ENCODE measurements at regions of chr2 and their contacts with region 1.

Region 1: DNA sequence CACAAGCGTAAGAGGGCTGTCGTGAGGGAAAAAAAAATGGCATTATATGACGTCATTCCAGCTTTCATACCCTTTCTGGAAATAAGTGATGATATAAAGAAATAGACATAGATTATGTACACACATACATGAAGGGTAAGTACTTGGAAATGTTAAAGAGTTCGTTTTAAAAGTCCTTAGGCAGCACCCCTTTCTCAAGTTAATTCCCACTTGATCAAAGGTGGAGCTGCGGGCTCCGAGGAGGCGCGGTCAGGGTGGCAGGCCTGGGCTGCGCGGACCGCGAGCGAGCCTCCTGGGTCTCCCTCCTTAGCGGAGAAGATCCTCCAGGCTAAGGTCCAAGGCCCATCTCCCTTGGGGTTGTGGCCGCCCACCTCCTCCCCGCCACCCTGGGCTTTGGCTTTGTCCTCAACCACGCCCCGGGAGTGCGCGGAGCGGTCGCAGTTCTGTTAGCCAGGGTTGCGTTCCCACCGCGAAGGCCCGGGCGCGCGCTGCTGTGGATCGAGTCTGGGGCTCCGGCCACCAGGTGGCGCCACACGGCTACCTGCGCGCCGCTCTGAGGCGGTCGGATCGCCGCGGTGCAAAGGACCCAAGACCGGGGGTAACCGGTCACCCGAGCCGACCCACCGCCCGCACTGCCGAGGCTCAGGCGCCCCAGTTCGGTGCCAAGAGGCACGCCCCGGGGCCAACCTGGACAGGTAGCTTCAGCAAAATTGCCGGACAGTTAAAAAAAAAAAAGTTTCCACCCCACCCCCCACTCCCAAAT is 66.8 kb downstream of the HNRNPLL start:
- DNase-seq: peak; percentile 80
- ATAC-seq: peak; percentile 94
- H3K4me3 ChIP-seq: peak overlapping the region; percentile 82
- H3K27ac ChIP-seq: no peak overlapping the region
- H3K4me1 ChIP-seq: no peaks in the 10 kb centered on the region
- H3K27me3 ChIP-seq: no peaks in the 10 kb centered on the region
- CTCF ChIP-seq: peak; percentile 88

Region 2: DNA sequence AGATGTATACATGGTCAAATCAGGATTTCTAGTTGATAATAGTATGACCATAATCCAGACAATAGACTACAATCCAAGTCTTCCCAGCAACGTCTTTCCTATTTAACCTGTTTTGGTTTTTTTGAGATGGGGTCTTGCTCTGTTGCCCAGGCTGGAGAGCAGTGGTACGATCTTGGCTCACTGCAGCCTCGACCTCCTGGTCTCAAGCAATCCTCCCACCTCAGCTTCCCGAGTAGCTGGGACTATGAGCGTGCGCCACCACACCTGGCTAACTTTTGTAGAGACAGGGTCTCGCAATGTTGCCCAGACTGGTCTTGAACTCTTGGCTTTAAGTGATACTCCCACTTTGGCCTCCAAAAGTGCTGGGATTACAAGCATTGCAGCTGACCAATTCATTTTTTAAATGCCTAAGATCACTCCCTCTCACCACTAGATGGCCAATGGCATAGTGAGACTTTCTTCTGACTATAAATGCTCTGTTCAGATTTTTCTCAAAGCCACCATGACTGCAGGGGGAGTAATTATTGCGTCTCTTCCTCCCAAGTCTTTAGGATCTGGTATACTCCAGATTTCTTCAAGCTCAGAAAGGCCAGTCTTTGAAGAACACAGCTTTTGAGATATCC is 19.2 kb after region 1 on chr2:
- CTCF ChIA-PET with region 1: interaction called, 18 read pairs
- POLR2A ChIA-PET with region 1: no interaction called
- intact Hi-C with region 1: no loop called
- DNase-seq: peak; percentile 56
- ATAC-seq: peak; percentile 77
- H3K4me3 ChIP-seq: no peak overlapping the region
- H3K27ac ChIP-seq: no peak overlapping the region
- H3K4me1 ChIP-seq: no peaks in the 10 kb centered on the region
- H3K27me3 ChIP-seq: no peaks in the 10 kb centered on the region
- CTCF ChIP-seq: peak; percentile 67

Region 3: GRCh38 chr2:38565333-38565732 is 29.4 kb after region 1 on chr2:
- CTCF ChIA-PET with region 1: interaction called, 13 read pairs
- POLR2A ChIA-PET with region 1: no interaction called
- intact Hi-C with region 1: no loop called
- DNase-seq: no peak
- ATAC-seq: no peak
- H3K4me3 ChIP-seq: no peak overlapping the region
- H3K27ac ChIP-seq: no peak overlapping the region
- H3K4me1 ChIP-seq: no peaks in the 10 kb centered on the region
- H3K27me3 ChIP-seq: no peaks in the 10 kb centered on the region
- CTCF ChIP-seq: no peak

Region 4: DNA sequence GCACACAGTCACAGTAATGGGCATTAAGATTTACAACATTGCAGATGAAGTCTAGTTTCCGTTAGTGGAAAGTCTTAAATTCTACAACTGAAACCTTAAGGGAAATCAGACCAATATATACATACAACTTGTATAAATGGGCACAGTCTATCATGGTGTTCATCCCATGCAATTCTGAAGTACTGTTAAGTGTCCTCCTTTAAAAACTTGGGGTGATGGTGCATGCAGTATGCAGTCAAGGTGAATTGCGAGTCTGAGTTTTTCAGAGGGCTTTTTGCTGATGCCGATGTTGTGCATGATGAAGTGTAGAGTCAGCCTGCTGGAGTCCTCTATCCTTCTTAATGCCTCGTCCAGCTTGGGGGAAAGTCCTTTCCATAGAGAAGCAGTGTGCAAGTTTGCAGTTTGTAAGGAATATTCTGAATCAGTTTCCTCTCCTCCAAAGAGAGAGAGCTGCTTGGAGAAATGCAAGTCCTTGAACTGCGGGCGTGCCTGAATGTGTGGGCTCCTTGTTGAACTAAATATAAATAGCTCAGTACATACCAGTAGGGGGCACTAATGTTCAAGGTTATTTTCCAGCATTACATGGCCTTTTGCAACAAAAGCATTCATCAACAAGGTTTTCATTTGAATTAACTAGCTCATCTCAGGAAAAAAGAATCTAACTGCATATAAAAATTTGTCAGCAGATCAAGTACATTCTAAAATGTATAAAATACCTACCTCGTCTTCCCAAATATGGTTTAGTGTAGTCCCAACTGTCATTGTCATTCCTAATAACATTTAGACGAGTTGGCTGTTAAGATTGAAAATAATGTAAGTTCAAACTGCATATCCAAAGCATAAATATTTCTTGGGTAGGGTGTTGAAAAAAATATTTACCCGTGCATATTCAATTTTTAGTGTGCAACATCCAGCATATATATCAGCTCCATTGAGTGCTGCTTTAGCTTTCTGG is 45.5 kb after region 1 on chr2:
- CTCF ChIA-PET with region 1: interaction called, 4 read pairs
- POLR2A ChIA-PET with region 1: no interaction called
- intact Hi-C with region 1: loop called (anchors 2 kb)
- DNase-seq: peak; percentile 86
- ATAC-seq: peak; percentile 74
- H3K4me3 ChIP-seq: no peak overlapping the region
- H3K27ac ChIP-seq: no peak overlapping the region
- H3K4me1 ChIP-seq: peaks cover 16% of the 10 kb centered on the region
- H3K27me3 ChIP-seq: no peaks in the 10 kb centered on the region
- CTCF ChIP-seq: peak; percentile 82

Region 5: GRCh38 chr2:38590053-38590452 is 54.1 kb after region 1 on chr2:
- CTCF ChIA-PET with region 1: no interaction called
- POLR2A ChIA-PET with region 1: no interaction called
- intact Hi-C with region 1: loop called (anchors 5 kb)
- DNase-seq: peak; percentile 25
- ATAC-seq: no peak
- H3K4me3 ChIP-seq: no peak overlapping the region
- H3K27ac ChIP-seq: no peak overlapping the region
- H3K4me1 ChIP-seq: peaks cover 41% of the 10 kb centered on the region
- H3K27me3 ChIP-seq: no peaks in the 10 kb centered on the region
- CTCF ChIP-seq: peak; percentile 56

Region 6: GRCh38 chr2:38727661-38728060 is 191.7 kb after region 1 on chr2:
- CTCF ChIA-PET with region 1: no interaction called
- POLR2A ChIA-PET with region 1: no interaction called
- intact Hi-C with region 1: loop called (anchors 2 kb)
- DNase-seq: no peak
- ATAC-seq: no peak
- H3K4me3 ChIP-seq: no peak overlapping the region
- H3K27ac ChIP-seq: no peak overlapping the region
- H3K4me1 ChIP-seq: no peaks in the 10 kb centered on the region
- H3K27me3 ChIP-seq: no peaks in the 10 kb centered on the region
- CTCF ChIP-seq: no peak

Measured in PC-3 (cell line).